CD8-positive, alpha-beta T cell (primary cell): ENCODE measurements at regions of chr12 and their contacts with region 1.

Region 1: DNA sequence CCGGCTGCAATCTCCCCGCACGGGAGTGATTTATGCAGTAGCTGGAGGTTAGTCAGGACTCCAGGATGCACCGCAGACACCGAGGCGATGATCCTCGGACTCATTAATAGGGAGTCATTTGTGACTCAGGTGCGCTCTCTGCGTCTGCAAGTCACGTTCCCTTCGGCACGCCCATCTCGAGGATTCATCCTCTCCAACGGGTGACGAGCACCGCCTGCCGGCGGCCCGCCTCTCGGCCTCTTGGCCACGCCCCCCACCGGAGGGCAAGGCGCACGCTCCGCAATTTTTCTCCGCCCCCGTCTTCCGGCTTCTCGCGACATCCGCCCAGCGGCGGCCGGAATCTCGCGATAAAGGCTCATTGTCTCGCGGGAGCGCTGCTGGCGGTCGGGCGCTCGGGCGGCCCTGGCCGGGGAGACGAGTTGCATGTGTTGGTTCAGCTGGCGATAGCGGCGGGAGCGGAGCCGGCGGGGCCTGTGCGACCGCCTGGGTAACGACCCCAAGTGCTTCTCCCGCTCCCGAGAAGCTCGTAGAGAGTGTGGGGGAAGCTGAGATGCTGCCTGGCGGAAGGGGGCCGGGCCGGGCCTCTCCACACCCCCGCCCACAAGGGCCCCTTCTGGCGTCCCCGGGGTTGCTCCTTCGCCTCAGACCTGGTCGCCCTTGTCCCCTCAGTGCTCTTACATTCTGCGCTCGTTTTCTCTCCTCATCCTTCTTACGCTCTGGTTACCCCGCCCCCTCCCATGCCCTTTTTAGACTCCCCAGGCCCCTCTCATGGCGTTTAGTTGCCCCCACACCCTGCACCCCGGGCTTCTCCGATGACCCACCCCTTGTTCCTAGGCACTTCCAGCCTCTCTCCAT is at the start of gene DENR:
- DNase-seq: peak; percentile 99
- ATAC-seq: peak; percentile 96
- H3K4me3 ChIP-seq: peak within 1 kb of the TSS; percentile 80 to 90
- H3K4me3 Mint-ChIP-seq: peak within 1 kb of the TSS; percentile 96
- H3K27ac ChIP-seq: peak within 1 kb of the TSS; percentile 87 to 94
- H3K27ac Mint-ChIP-seq: peak within 1 kb of the TSS; percentile 97
- H3K4me1 ChIP-seq: peaks cover 26% of the 10 kb centered on the region
- H3K4me1 Mint-ChIP-seq: peaks cover 47% of the 10 kb centered on the region
- H3K27me3 ChIP-seq: no peaks in the 10 kb centered on the region
- H3K27me3 Mint-ChIP-seq: no peaks in the 10 kb centered on the region
- CTCF ChIP-seq: peak; percentile 56
- total RNA-seq, gene DENR: 27.8 to 29.7 TPM

Region 2: GRCh38 chr12:121811434-121812319 is 941.0 kb before region 1 on chr12:
- CTCF ChIA-PET with region 1: no interaction called
- POLR2A ChIA-PET with region 1: no interaction called
- intact Hi-C with region 1: no loop called
- DNase-seq: peak; percentile 51 to 86 (median 68)
- ATAC-seq: peak; percentile 70
- H3K4me3 ChIP-seq: peak overlapping the region; percentile 52 to 74
- H3K4me3 Mint-ChIP-seq: peak overlapping the region; percentile 83
- H3K27ac ChIP-seq: peak overlapping the region in 1 of 2 experiments; percentile 40
- H3K27ac Mint-ChIP-seq: peak overlapping the region; percentile 89
- H3K4me1 ChIP-seq: peaks cover 50% of the 10 kb centered on the region
- H3K4me1 Mint-ChIP-seq: peaks cover 57% of the 10 kb centered on the region
- H3K27me3 ChIP-seq: no peaks in the 10 kb centered on the region
- H3K27me3 Mint-ChIP-seq: no peaks in the 10 kb centered on the region
- CTCF ChIP-seq: peak; percentile 96

Region 3: GRCh38 chr12:122399592-122400373 is 352.9 kb before region 1 on chr12:
- CTCF ChIA-PET with region 1: interaction called, 4 read pairs
- POLR2A ChIA-PET with region 1: no interaction called
- intact Hi-C with region 1: loop called in 1 of 2 experiments (anchors 1 kb)
- DNase-seq: peak in 8 of 9 experiments; percentile 16 to 79 (median 54)
- ATAC-seq: peak; percentile 84
- H3K4me3 ChIP-seq: no peak overlapping the region
- H3K4me3 Mint-ChIP-seq: no peak overlapping the region
- H3K27ac ChIP-seq: no peak overlapping the region
- H3K27ac Mint-ChIP-seq: peak overlapping the region; percentile 78
- H3K4me1 ChIP-seq: peaks cover 6% of the 10 kb centered on the region
- H3K4me1 Mint-ChIP-seq: peaks cover 21% of the 10 kb centered on the region
- H3K27me3 ChIP-seq: no peaks in the 10 kb centered on the region
- H3K27me3 Mint-ChIP-seq: no peaks in the 10 kb centered on the region
- CTCF ChIP-seq: peak; percentile 74

Region 4: GRCh38 chr12:122526683-122527477 is 225.8 kb before region 1 on chr12 and contains the starts of genes KNTC1 and RSRC2:
- CTCF ChIA-PET with region 1: no interaction called
- POLR2A ChIA-PET with region 1: interaction called, 4 read pairs
- intact Hi-C with region 1: loop called (anchors 1 kb)
- DNase-seq: peak; percentile 94 to 100 (median 96)
- ATAC-seq: peak; percentile 94
- H3K4me3 ChIP-seq: peak within 1 kb of the TSS; percentile 70 to 72
- H3K4me3 Mint-ChIP-seq: no peak within 1 kb of the TSS
- H3K27ac ChIP-seq: peak within 1 kb of the TSS; percentile 96 to 99
- H3K27ac Mint-ChIP-seq: peak within 1 kb of the TSS; percentile 15
- H3K4me1 ChIP-seq: peaks cover 35% of the 10 kb centered on the region
- H3K4me1 Mint-ChIP-seq: peaks cover 34% of the 10 kb centered on the region
- H3K27me3 ChIP-seq: no peaks in the 10 kb centered on the region
- H3K27me3 Mint-ChIP-seq: no peaks in the 10 kb centered on the region
- CTCF ChIP-seq: no peak
- total RNA-seq, gene KNTC1: 14.1 to 15.1 TPM
- total RNA-seq, gene RSRC2: 325 to 333 TPM

Region 5: DNA sequence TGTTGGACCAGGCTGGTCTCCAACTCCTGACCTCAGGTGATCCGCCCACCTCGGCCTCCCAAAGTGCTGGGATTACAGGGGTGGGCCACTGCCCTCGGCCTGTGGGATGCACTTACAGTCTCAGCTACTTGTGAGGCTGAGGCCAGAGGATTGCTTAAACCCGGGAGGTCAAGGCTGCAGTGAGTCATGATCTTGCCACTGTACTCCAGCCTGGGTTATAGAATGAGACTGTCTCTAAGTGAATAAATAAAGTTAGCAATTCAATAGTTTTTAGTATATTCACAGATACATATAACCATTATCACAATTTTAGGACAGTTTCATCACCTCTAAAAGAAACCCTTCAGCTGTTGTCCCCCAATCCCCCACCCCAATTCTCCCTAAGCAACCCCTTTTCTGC is 110.7 kb before region 1 on chr12:
- CTCF ChIA-PET with region 1: no interaction called
- POLR2A ChIA-PET with region 1: no interaction called
- intact Hi-C with region 1: loop called in 1 of 2 experiments (anchors 2 kb)
- DNase-seq: no peak
- ATAC-seq: no peak
- H3K4me3 ChIP-seq: no peak overlapping the region
- H3K4me3 Mint-ChIP-seq: no peak overlapping the region
- H3K27ac ChIP-seq: no peak overlapping the region
- H3K27ac Mint-ChIP-seq: no peak overlapping the region
- H3K4me1 ChIP-seq: no peaks in the 10 kb centered on the region
- H3K4me1 Mint-ChIP-seq: peaks cover 3% of the 10 kb centered on the region
- H3K27me3 ChIP-seq: no peaks in the 10 kb centered on the region
- H3K27me3 Mint-ChIP-seq: peaks cover 2% of the 10 kb centered on the region
- CTCF ChIP-seq: no peak

Region 6: DNA sequence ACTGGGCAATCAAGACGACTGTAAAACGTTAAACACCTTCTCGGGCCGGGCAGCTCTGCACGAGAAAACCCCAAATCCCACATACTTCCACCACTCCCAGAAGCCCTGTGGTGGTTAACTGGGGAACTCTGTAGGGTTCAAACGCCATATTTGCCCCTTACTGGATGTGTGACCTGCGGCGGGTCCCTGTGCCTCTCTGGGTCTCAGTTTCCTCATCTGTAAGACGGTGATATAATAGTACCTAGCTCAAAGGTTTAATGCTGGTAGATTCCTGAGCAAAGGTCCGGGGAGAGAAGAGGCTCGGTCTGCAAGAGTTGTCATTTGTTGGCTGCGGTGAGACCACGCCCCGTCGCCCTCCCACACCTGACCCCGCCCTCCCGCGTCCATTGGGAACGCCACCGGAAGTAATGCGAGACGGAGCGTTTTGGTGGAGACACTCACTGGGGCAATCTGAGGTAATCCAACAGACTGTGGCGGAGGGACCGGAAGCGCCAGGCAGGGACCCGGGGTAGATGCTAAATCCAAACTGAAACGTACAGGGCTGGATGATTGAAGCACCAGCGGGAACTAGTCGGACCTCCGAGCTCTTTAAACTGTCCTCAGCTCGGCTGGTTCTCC is 221.7 kb after region 1 on chr12:
- CTCF ChIA-PET with region 1: no interaction called
- POLR2A ChIA-PET with region 1: no interaction called
- intact Hi-C with region 1: loop called (anchors 1 kb)
- DNase-seq: peak; percentile 97 to 100 (median 99)
- ATAC-seq: peak; percentile 85
- H3K4me3 ChIP-seq: peak overlapping the region; percentile 91 to 93
- H3K4me3 Mint-ChIP-seq: peak overlapping the region; percentile 98
- H3K27ac ChIP-seq: peak overlapping the region; percentile 93 to 97
- H3K27ac Mint-ChIP-seq: peak overlapping the region; percentile 98
- H3K4me1 ChIP-seq: peaks cover 26% of the 10 kb centered on the region
- H3K4me1 Mint-ChIP-seq: peaks cover 31% of the 10 kb centered on the region
- H3K27me3 ChIP-seq: no peaks in the 10 kb centered on the region
- H3K27me3 Mint-ChIP-seq: no peaks in the 10 kb centered on the region
- CTCF ChIP-seq: no peak

Region 7: DNA sequence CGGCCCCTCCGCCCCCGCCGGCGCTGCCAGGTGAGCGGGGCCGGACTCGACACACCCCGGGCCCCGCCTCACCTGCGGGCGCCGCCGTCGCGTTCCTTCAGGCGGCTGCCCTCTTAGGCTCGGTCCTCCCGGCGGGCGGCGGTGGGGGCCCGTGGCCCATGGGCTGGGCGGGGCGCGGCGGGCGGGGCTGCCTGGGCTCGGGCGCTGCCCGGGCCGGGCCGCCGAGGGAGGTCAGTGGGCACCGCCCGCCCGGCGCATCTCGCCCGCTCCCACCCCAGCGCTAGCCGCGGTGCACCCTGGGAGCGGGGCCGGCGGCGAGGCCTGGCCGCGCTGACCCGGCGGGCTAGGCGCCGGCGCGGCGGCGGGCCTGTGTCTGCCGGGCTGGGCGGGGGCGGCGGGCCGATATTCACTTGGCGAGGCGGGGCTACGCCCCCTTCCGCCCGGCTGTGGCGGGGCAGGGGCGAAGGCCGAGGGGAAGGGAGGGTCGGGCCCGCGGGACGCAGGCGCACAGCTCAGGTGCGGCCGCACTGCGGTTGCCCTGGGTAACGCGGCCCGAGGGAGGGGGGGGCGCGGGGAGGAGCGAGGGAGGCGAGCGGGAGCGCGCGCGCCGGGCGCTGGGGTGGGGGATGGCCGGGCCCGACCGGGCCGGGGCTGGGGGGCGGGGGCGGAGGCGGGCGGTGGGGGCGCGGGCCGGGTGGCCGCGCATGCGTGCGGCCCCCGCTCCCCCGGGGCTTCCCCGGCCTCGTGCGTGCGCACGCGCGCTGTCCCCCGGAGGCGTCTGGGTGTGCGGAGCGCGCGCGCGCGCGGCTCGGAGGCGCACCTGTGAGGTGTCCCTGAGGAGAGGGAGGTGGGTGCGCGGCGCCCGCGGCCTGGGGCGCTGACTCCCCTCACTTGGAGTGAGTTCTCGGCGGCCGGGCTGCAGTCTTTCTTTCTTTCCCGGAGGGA is 1220.0 kb after region 1 on chr12 and contains the starts of genes CCDC92 and ZNF664:
- CTCF ChIA-PET with region 1: no interaction called
- POLR2A ChIA-PET with region 1: no interaction called
- intact Hi-C with region 1: loop called (anchors 5 kb)
- DNase-seq: peak; percentile 88 to 98 (median 95)
- ATAC-seq: peak; percentile 75
- H3K4me3 ChIP-seq: peak within 1 kb of the TSS; percentile 60 to 63
- H3K4me3 Mint-ChIP-seq: peak within 1 kb of the TSS; percentile 91
- H3K27ac ChIP-seq: peak within 1 kb of the TSS; percentile 34 to 44
- H3K27ac Mint-ChIP-seq: peak within 1 kb of the TSS; percentile 89
- H3K4me1 ChIP-seq: peaks cover 19% of the 10 kb centered on the region
- H3K4me1 Mint-ChIP-seq: peaks cover 36% of the 10 kb centered on the region
- H3K27me3 ChIP-seq: no peaks in the 10 kb centered on the region
- H3K27me3 Mint-ChIP-seq: no peaks in the 10 kb centered on the region
- CTCF ChIP-seq: no peak
- total RNA-seq, gene CCDC92: 6.9 to 8.1 TPM
- total RNA-seq, gene ZNF664: 14.2 to 17.9 TPM